Activated CD4-positive, alpha-beta T cell treated with anti-CD3 and anti-CD28 coated beads for 36 hours (primary cell): ENCODE measurements at regions of chr3 and their contacts with region 1.

Region 1: DNA sequence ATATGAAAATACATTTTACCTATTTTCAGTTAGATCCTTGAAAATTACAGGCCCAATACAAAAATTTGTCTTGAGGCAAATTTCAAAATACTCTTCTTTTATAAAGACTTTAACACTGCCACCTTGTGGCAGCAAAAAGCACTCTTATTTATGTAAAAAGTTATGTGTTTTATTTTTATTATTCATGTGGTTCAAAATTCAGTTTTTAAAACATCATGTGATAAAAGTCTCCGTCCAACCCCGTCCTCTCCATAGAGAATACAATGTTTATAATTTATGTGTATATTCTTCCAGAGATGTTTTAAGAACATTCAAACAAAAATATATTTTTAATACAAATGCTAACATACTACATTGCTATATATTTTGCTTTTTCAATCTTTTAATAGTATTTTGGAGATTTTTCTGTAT is 36.9 kb upstream of the TRIM59 start:
- DNase-seq: no peak
- ATAC-seq: no peak
- H3K4me3 Mint-ChIP-seq: no peak overlapping the region
- H3K27ac Mint-ChIP-seq: no peak overlapping the region
- H3K4me1 Mint-ChIP-seq: peaks cover 3% of the 10 kb centered on the region
- H3K27me3 Mint-ChIP-seq: peaks cover 6% of the 10 kb centered on the region

Region 2: DNA sequence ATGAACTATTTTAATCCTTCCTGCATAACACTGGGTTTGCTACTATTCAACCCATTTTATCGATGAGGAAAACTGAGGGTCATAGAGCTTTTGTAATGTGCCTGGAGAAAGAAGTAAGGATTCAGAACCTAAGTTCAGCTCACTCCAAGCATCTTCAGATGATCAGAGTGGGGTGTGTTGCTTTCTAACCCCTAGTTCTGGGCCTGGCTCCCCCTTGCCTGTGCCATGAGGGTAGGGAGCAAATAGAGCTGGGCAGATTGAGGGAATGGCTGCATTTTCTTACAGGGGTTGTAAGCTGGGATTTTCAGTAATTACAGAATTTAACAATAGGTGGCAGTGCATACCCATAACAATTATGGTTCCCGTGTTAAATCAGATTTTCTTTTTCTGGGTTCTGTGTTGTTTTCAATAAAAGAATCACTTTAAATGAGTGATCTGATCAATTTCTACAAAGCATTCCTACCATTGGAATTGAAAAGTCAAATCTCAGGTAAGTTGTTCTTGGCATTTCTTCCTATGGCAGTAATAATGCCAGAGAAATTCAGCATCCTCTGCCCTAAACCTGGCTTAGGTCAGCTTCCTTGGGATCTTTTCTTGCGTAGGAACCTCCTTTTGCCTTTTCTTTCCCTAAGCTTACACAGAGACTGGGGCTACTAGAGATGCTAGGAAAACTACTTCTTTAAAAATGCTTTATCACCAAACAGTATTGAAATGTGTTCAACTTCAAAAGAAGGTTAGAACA is 601.6 kb before region 1 on chr3:
- CTCF ChIA-PET with region 1: no interaction called
- POLR2A ChIA-PET with region 1: no interaction called
- intact Hi-C with region 1: loop called (anchors 1 to 2 kb)
- DNase-seq: no peak
- ATAC-seq: peak; percentile 33
- H3K4me3 Mint-ChIP-seq: no peak overlapping the region
- H3K27ac Mint-ChIP-seq: no peak overlapping the region
- H3K4me1 Mint-ChIP-seq: no peaks in the 10 kb centered on the region
- H3K27me3 Mint-ChIP-seq: peaks cover 3% of the 10 kb centered on the region

Region 3: GRCh38 chr3:160163229-160163878 is 323.1 kb before region 1 on chr3:
- CTCF ChIA-PET with region 1: interaction called, 3 read pairs
- POLR2A ChIA-PET with region 1: no interaction called
- intact Hi-C with region 1: loop called (anchors 1 to 5 kb)
- DNase-seq: no peak
- ATAC-seq: no peak
- H3K4me3 Mint-ChIP-seq: no peak overlapping the region
- H3K27ac Mint-ChIP-seq: no peak overlapping the region
- H3K4me1 Mint-ChIP-seq: no peaks in the 10 kb centered on the region
- H3K27me3 Mint-ChIP-seq: no peaks in the 10 kb centered on the region

Region 4: DNA sequence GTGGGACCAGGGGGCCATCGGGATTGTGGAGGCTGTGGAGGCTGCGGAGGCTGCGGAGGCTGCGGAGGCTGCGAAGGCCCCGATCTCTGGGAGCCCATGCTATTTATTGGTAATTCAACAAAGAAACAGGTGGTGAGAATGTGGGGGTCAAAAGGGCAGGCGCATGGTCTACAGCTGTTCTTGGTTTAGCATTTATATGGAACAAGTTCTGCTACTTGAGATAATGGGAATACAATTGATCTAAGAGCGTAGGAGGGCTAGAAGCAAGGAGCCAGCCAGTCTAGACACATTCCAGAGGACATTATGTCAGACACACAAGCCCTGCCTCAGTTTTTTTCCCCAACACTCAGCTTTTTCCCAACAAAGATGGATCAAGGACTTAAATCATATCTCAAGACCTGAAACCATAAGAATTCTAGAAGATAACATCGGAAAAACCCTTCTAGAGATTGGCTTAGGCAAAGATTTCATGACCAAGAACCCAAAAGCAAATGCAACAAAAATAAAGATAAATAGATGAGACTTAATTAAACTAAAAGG is 241.1 kb before region 1 on chr3:
- CTCF ChIA-PET with region 1: no interaction called
- POLR2A ChIA-PET with region 1: no interaction called
- intact Hi-C with region 1: no loop called
- DNase-seq: no peak
- ATAC-seq: no peak
- H3K4me3 Mint-ChIP-seq: no peak overlapping the region
- H3K27ac Mint-ChIP-seq: no peak overlapping the region
- H3K4me1 Mint-ChIP-seq: no peaks in the 10 kb centered on the region
- H3K27me3 Mint-ChIP-seq: peaks cover 12% of the 10 kb centered on the region

Region 5: GRCh38 chr3:160434071-160434470 is 52.4 kb before region 1 on chr3:
- CTCF ChIA-PET with region 1: interaction called, 4 read pairs
- POLR2A ChIA-PET with region 1: no interaction called
- intact Hi-C with region 1: loop called in 1 of 2 experiments (anchors 5 kb)
- DNase-seq: no peak
- ATAC-seq: no peak
- H3K4me3 Mint-ChIP-seq: no peak overlapping the region
- H3K27ac Mint-ChIP-seq: no peak overlapping the region
- H3K4me1 Mint-ChIP-seq: peaks cover 23% of the 10 kb centered on the region
- H3K27me3 Mint-ChIP-seq: no peaks in the 10 kb centered on the region